ENCODE measurements at regions of chr15 and their contacts with region 1.

Region 1: DNA sequence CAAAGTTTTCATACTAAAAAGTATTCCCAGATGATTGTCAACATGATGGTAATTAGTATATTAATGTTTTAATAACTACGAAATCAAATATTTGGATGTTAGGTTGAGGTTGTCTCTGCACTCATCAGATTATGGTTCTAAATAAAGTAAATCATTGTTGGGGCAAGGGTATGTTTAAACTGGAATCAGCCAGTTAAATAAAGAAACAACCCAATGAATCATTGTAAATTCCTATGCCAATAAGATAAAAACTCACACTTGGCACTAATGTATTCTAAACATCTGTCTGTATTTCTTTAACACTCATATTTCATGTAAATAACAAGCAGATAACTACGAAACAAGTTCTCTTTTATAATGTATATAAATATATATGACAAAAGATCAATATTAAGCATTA is 92.7 kb downstream of the PEAK1 start:
- DNase-seq: no peak
- ATAC-seq: no peak
- H3K4me3 ChIP-seq: no peak overlapping the region
- H3K27ac ChIP-seq: no peak overlapping the region
- H3K4me1 ChIP-seq: no peaks in the 10 kb centered on the region
- H3K27me3 ChIP-seq: no peaks in the 10 kb centered on the region
- CTCF ChIP-seq: no peak
- EP300 ChIP-seq: no peak
- POLR2A ChIP-seq: no peak
- RAD21 ChIP-seq: no peak

Region 2: GRCh38 chr15:77312523-77312922 is 14.6 kb before region 1 on chr15:
- CTCF ChIA-PET with region 1: interaction called, 4 read pairs
- POLR2A ChIA-PET with region 1: no interaction called
- RAD21 ChIA-PET with region 1: no interaction called
- SMC1A ChIA-PET with region 1: interaction called, 13 read pairs
- in situ Hi-C with region 1: no loop called
- intact Hi-C with region 1: no loop called
- DNase-seq: no peak
- ATAC-seq: no peak
- H3K4me3 ChIP-seq: no peak overlapping the region
- H3K27ac ChIP-seq: no peak overlapping the region
- H3K4me1 ChIP-seq: peaks cover 7% of the 10 kb centered on the region; the same call in 1 of the 2 replicates
- H3K27me3 ChIP-seq: no peaks in the 10 kb centered on the region
- CTCF ChIP-seq: no peak
- EP300 ChIP-seq: no peak
- POLR2A ChIP-seq: no peak
- RAD21 ChIP-seq: no peak